ENCODE measurements at regions of chr1 and their contacts with region 1.

Region 1: GRCh38 chr1:94515296-94515947 is 26.1 kb downstream of the F3 start:
- DNase-seq: no peak
- H3K4me3 ChIP-seq: no peak overlapping the region
- H3K27ac ChIP-seq: no peak overlapping the region
- H3K4me1 ChIP-seq: no peaks in the 10 kb centered on the region
- CTCF ChIP-seq: no peak

Region 2: DNA sequence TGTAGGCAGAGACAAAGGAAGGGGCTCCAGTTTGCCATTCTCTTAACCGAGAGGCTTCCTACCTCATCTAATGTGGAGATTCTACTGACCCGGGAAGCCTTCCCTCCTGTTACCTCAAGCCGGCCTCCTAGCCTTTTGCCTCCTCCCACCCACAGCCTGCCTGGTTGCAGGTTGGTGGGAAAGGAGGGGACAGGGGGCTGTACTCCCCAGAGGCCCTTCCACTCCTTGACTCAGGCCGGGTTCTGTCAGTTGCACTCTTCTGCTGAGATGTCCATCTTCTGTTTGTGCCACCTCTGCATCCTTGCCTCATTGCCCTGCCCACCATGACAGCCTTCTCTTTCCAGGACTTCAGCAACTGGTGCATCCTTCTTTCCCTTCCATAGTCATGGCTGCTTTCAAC is 206.8 kb after region 1 on chr1:
- CTCF ChIA-PET with region 1: no interaction called
- POLR2A ChIA-PET with region 1: interaction called, 10 read pairs
- intact Hi-C with region 1: no loop called
- DNase-seq: no peak
- H3K4me3 ChIP-seq: no peak overlapping the region
- H3K27ac ChIP-seq: no peak overlapping the region
- H3K4me1 ChIP-seq: no peaks in the 10 kb centered on the region
- CTCF ChIP-seq: no peak